A549 (cell line): ENCODE measurements at regions of chr5 and their contacts with region 1.

Region 1: GRCh38 chr5:14270209-14270702 is 127.1 kb downstream of the TRIO start:
- DNase-seq: peak; percentile 74 to 76
- ATAC-seq: peak; percentile 65 to 66
- H3K4me3 ChIP-seq: no peak overlapping the region
- H3K27ac ChIP-seq: peak overlapping the region; percentile 66 to 84
- H3K4me1 ChIP-seq: peaks cover 83% of the 10 kb centered on the region
- CTCF ChIP-seq: peak; percentile 88
- EP300 ChIP-seq: no peak
- POLR2A ChIP-seq: no peak
- RAD21 ChIP-seq: peak; percentile 87 to 89

Region 2: DNA sequence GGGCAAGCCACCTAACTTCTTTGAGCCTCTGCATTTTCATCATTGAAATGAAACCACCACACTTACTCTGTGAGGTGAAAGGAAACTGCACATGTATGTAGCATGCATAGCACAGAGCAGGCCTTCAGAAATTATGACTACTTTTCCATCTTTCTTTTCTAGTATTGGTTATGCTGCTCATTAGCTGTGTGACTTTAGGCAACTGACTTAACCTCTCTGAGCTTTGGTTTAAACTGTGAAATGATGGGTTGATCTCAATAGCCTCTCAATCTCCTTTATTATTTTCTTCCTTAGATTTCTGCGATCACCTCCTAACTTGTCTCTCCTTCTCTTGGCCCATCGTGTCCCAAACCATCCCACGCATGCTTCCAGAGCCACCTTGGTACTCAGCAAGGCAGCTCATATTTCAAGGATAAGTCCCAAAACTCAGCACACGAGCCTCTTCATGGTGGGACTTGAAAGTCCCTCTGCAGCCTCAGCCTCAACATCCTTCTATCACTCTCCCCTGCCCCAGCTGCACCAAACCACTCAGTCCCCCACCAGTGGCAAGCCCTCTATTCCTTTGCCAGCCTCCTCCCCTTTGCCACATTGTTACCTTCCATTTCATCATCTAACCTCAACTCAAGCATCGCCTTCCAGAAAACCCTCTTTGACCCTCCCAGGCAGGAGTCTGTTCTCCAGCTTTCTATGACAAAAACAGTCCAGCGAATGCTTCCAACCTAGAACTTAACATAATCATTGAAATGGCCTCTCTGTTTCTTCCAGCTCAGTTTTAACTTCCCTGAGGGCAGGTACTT is 265.5 kb before region 1 on chr5:
- CTCF ChIA-PET with region 1: interaction called, 12 read pairs
- POLR2A ChIA-PET with region 1: no interaction called
- DNase-seq: no peak
- ATAC-seq: no peak
- H3K4me3 ChIP-seq: no peak overlapping the region
- H3K27ac ChIP-seq: peak overlapping the region; percentile 38 to 55; a peak in 3 of 6 replicates
- H3K4me1 ChIP-seq: peaks cover 35% of the 10 kb centered on the region
- CTCF ChIP-seq: no peak
- EP300 ChIP-seq: no peak
- POLR2A ChIP-seq: no peak
- RAD21 ChIP-seq: no peak

Region 3: DNA sequence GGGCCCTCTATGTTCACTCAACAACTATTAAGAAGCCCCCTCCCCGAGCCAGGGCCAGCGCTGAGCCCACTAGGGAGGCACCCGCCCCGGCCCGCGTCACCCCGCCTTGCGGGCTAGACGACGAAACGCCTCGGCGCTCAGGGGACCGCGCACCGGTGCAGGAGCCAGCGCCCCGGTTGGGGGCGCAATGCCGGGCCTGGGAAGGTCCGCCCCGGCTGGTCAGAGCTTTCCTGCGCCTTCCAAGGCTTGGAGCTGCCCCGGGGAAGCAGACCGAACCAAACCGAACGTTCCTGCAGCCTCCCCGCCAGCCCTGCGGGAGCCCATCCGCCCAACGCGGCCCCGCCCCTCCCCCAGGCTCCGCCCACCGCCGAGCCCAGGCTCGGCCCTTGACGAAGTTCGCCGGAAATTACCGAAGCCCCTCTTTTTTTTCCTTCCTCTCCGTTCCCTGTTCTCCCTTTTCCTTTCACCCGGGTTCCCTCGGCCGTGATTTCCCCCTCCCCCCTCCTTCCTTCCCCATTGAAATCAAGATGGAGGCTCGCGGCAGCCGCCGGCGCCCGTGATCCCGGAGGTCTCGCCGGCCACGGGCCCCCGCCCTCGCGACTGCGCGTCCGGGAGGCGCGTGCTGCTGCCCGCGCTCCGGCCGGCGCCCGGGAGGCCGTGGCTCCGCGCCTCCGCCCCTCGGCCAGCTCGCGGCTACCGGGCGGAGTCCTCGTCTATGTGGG is 127.3 kb before region 1 on chr5 and contains the start of gene TRIO:
- CTCF ChIA-PET with region 1: interaction called, 53 read pairs
- POLR2A ChIA-PET with region 1: interaction called, 7 read pairs
- DNase-seq: peak; percentile 90 to 92
- ATAC-seq: peak; percentile 68 to 80
- H3K4me3 ChIP-seq: peak within 1 kb of the TSS; percentile 97
- H3K27ac ChIP-seq: peak within 1 kb of the TSS; percentile 99 to 100
- H3K4me1 ChIP-seq: peaks cover 33% of the 10 kb centered on the region
- CTCF ChIP-seq: peak; percentile 57
- EP300 ChIP-seq: no peak
- POLR2A ChIP-seq: peak; percentile 45
- RAD21 ChIP-seq: peak; percentile 23 to 73; a peak in 4 of 5 replicates
- polyA plus RNA-seq, gene TRIO: 79.0 and 91.2 TPM in 2 replicates

Region 4: GRCh38 chr5:14190194-14191164 is 79.8 kb before region 1 on chr5:
- CTCF ChIA-PET with region 1: interaction called, 14 read pairs
- POLR2A ChIA-PET with region 1: interaction called, 6 read pairs
- DNase-seq: peak; percentile 85
- ATAC-seq: peak; percentile 86 to 88
- H3K4me3 ChIP-seq: peak overlapping the region; percentile 26
- H3K27ac ChIP-seq: peak overlapping the region; percentile 79 to 92
- H3K4me1 ChIP-seq: peaks cover 93% of the 10 kb centered on the region
- CTCF ChIP-seq: no peak
- EP300 ChIP-seq: peak in 1 of 2 experiments; percentile 56; a peak in 1 of 5 replicates
- POLR2A ChIP-seq: no peak
- RAD21 ChIP-seq: no peak; a peak in 2 of 5 replicates

Region 5: DNA sequence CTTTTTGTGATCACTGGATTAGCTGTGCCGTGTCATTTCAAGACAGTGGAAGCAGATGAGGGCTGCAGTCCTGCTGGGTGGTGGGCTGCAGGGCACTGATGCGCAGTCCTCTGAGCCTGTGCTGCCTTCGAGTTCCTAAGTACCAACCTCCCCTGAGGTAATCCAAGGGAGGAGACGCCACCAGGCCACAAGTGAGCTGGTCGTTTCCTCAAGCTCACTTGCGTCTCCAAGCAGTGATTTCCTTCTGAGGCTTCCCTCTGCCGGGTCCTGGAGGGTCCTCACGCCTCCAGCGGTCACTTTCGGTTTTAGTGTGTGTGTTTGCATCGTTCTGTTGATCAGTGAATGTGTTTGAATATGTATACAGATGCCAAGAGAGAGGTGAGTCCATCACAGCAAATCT is 11.4 kb before region 1 on chr5:
- CTCF ChIA-PET with region 1: interaction called, 19 read pairs
- POLR2A ChIA-PET with region 1: no interaction called
- DNase-seq: no peak
- ATAC-seq: no peak
- H3K4me3 ChIP-seq: no peak overlapping the region
- H3K27ac ChIP-seq: no peak overlapping the region
- H3K4me1 ChIP-seq: peaks cover 36% of the 10 kb centered on the region
- CTCF ChIP-seq: no peak
- EP300 ChIP-seq: no peak
- POLR2A ChIP-seq: no peak
- RAD21 ChIP-seq: no peak

Region 6: DNA sequence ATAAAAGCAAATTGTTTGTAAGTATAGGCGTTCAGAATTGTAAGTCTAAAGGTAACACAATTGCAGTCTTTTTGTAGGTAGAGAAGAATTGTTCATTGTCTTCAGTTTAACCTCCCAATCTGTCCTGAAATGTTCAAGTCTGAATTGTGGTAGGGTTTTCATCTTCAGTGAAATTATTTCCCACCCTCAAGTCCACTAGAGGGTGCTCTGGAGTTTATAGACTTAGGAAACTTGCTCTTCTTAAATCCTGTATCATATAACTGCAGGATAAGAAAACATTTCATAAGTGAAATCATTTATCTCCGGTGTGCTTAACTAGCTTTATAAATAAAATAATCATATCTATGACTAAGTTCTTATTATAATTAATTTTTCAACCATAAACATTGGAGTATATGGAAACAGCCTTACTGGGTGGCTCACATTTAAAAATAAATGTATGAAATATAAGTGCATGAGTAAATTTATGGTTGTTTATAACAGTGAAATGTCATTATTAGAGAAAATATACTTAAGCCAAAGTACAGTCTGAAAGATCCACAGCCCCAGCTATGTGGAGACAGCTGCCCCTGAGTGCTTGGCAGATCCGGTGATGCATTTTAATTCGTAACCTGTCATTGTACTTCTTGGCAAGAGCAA is 128.9 kb after region 1 on chr5:
- CTCF ChIA-PET with region 1: no interaction called
- POLR2A ChIA-PET with region 1: no interaction called
- DNase-seq: peak; percentile 48 to 53
- ATAC-seq: peak in 1 of 2 experiments; percentile 76; a peak in 3 of 6 replicates
- H3K4me3 ChIP-seq: no peak overlapping the region
- H3K27ac ChIP-seq: peak overlapping the region in 1 of 2 experiments; percentile 47; a peak in 1 of 6 replicates
- H3K4me1 ChIP-seq: peaks cover 14% of the 10 kb centered on the region
- CTCF ChIP-seq: peak; percentile 75
- EP300 ChIP-seq: no peak
- POLR2A ChIP-seq: no peak
- RAD21 ChIP-seq: peak; percentile 35 to 48; a peak in 3 of 5 replicates

Region 7: DNA sequence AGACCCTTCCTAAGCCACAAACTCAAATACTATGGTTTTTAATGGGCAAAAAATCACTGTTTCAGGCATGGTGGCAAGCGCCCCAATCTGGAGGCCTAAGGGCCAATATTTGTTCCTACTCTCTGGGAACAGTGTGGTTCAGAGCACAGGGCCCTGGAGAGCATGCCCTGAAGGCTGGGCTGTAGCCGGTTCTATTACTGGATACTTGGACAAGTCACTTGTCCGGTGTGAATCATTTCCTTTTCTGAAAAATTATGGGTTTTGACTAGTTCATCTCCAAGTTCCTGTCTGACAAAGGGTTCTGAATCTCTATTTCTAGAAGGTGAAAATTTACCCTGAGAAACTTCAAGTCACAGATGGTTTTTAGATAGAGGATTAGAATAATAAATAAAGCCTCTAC is 469.3 kb after region 1 on chr5:
- CTCF ChIA-PET with region 1: no interaction called
- POLR2A ChIA-PET with region 1: no interaction called
- DNase-seq: no peak
- ATAC-seq: no peak
- H3K4me3 ChIP-seq: no peak overlapping the region
- H3K27ac ChIP-seq: no peak overlapping the region
- H3K4me1 ChIP-seq: no peaks in the 10 kb centered on the region
- CTCF ChIP-seq: no peak
- EP300 ChIP-seq: no peak
- POLR2A ChIP-seq: no peak
- RAD21 ChIP-seq: no peak